B cell (primary cell): ENCODE measurements at regions of chr2 and their contacts with region 1.

Region 1: GRCh38 chr2:174682578-174683391 is 81.5 kb downstream of the CHRNA1 start:
- DNase-seq: peak; percentile 72
- ATAC-seq: peak; percentile 70
- H3K4me3 ChIP-seq: peak overlapping the region; percentile 67 to 87 (median 72)
- H3K4me3 Mint-ChIP-seq: peak overlapping the region; percentile 93
- H3K27ac ChIP-seq: peak overlapping the region in 1 of 2 donors; percentile 67
- H3K27ac Mint-ChIP-seq: peak overlapping the region; percentile 86
- H3K4me1 ChIP-seq: peaks cover 8 to 14% of the 10 kb centered on the region in 2 donors
- H3K4me1 Mint-ChIP-seq: peaks cover 21% of the 10 kb centered on the region
- H3K27me3 ChIP-seq: no peaks in the 10 kb centered on the region
- H3K27me3 Mint-ChIP-seq: no peaks in the 10 kb centered on the region
- CTCF ChIP-seq: no peak

Region 2: GRCh38 chr2:174395284-174395968 is 287.4 kb before region 1 on chr2 and contains the start of gene SCRN3:
- CTCF ChIA-PET with region 1: no interaction called
- POLR2A ChIA-PET with region 1: no interaction called
- intact Hi-C with region 1: loop called (anchors 5 kb)
- DNase-seq: peak; percentile 87
- ATAC-seq: peak; percentile 94
- H3K4me3 ChIP-seq: peak within 1 kb of the TSS; percentile 81 to 97 (median 90)
- H3K4me3 Mint-ChIP-seq: peak within 1 kb of the TSS; percentile 99
- H3K27ac ChIP-seq: peak within 1 kb of the TSS; percentile 88 to 94
- H3K27ac Mint-ChIP-seq: peak within 1 kb of the TSS; percentile 99
- H3K4me1 ChIP-seq: peaks cover 14 to 24% of the 10 kb centered on the region in 2 donors
- H3K4me1 Mint-ChIP-seq: peaks cover 39% of the 10 kb centered on the region
- H3K27me3 ChIP-seq: no peaks in the 10 kb centered on the region
- H3K27me3 Mint-ChIP-seq: no peaks in the 10 kb centered on the region
- CTCF ChIP-seq: no peak
- total RNA-seq, gene SCRN3: 16.9 and 21.6 TPM in 2 replicates

Region 3: GRCh38 chr2:174593574-174594203 is 89.1 kb before region 1 on chr2:
- CTCF ChIA-PET with region 1: interaction called, 202 read pairs
- POLR2A ChIA-PET with region 1: no interaction called
- intact Hi-C with region 1: loop called (anchors 2 kb)
- DNase-seq: peak; percentile 88
- ATAC-seq: peak; percentile 66
- H3K4me3 ChIP-seq: peak overlapping the region; percentile 53 to 92 (median 71)
- H3K4me3 Mint-ChIP-seq: peak overlapping the region; percentile 93
- H3K27ac ChIP-seq: peak overlapping the region; percentile 93 to 98
- H3K27ac Mint-ChIP-seq: peak overlapping the region; percentile 96
- H3K4me1 ChIP-seq: peaks cover 63 to 65% of the 10 kb centered on the region in 2 donors
- H3K4me1 Mint-ChIP-seq: peaks cover 65% of the 10 kb centered on the region
- H3K27me3 ChIP-seq: no peaks in the 10 kb centered on the region
- H3K27me3 Mint-ChIP-seq: no peaks in the 10 kb centered on the region
- CTCF ChIP-seq: no peak

Region 4: GRCh38 chr2:174603280-174603679 is 79.5 kb before region 1 on chr2:
- CTCF ChIA-PET with region 1: interaction called, 202 read pairs
- POLR2A ChIA-PET with region 1: interaction called, 3 read pairs
- intact Hi-C with region 1: loop called (anchors 2 kb)
- DNase-seq: peak; percentile 69
- ATAC-seq: no peak
- H3K4me3 ChIP-seq: no peak overlapping the region
- H3K4me3 Mint-ChIP-seq: no peak overlapping the region
- H3K27ac ChIP-seq: peak overlapping the region in 1 of 2 donors; percentile 8
- H3K27ac Mint-ChIP-seq: peak overlapping the region; percentile 71
- H3K4me1 ChIP-seq: peaks cover 69 to 74% of the 10 kb centered on the region in 2 donors
- H3K4me1 Mint-ChIP-seq: peaks cover 86% of the 10 kb centered on the region
- H3K27me3 ChIP-seq: no peaks in the 10 kb centered on the region
- H3K27me3 Mint-ChIP-seq: no peaks in the 10 kb centered on the region
- CTCF ChIP-seq: peak; percentile 71

Region 5: DNA sequence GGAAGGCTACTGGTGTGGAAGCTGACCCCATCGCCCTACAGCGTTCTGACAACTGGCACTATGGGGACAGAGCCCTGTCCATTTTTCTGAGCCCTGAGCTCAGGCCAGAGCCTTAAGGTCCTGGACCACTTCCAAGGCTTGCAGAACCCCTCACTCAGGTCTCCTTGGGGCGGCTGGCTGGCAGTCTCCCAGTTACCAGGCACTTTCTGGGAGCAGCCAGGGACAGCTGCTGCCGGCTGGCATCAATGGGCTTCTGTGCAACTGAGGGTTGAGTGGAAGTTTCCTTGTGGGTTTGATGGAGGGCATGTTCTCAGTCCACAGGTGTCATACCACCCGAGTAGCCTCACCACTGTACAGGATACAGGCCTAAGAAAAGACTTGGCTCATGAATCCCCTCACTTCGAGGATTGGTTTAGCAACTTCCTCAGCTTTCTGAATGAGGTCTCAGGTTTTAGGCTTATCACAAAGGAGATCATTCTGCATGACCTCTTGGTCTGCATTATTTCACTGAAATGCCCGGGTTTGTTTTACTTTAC is 57.8 kb before region 1 on chr2:
- CTCF ChIA-PET with region 1: no interaction called
- POLR2A ChIA-PET with region 1: no interaction called
- intact Hi-C with region 1: no loop called
- DNase-seq: no peak
- ATAC-seq: peak; percentile 32
- H3K4me3 ChIP-seq: no peak overlapping the region
- H3K4me3 Mint-ChIP-seq: peak overlapping the region; percentile 1
- H3K27ac ChIP-seq: peak overlapping the region in 1 of 2 donors; percentile 69
- H3K27ac Mint-ChIP-seq: peak overlapping the region; percentile 57
- H3K4me1 ChIP-seq: peaks cover 62 to 72% of the 10 kb centered on the region in 2 donors
- H3K4me1 Mint-ChIP-seq: peaks cover 79% of the 10 kb centered on the region
- H3K27me3 ChIP-seq: no peaks in the 10 kb centered on the region
- H3K27me3 Mint-ChIP-seq: no peaks in the 10 kb centered on the region
- CTCF ChIP-seq: no peak